Prostate gland (tissue), 2 donors: ENCODE measurements at regions of chr14 and their contacts with region 1.

Region 1: GRCh38 chr14:52824507-52824906 is 33.1 kb upstream of the GNPNAT1 start:
- DNase-seq: no peak
- H3K4me3 ChIP-seq: no peak overlapping the region
- H3K27ac ChIP-seq: no peak overlapping the region
- H3K4me1 ChIP-seq: no peaks in the 10 kb centered on the region
- H3K27me3 ChIP-seq: no peaks in the 10 kb centered on the region
- CTCF ChIP-seq: no peak
- POLR2A ChIP-seq: no peak

Region 2: GRCh38 chr14:52961060-52961639 is 136.6 kb after region 1 on chr14:
- intact Hi-C with region 1: loop called (anchors 2 kb)
- DNase-seq: peak; percentile 63
- H3K4me3 ChIP-seq: no peak overlapping the region
- H3K27ac ChIP-seq: peak overlapping the region; percentile 20 to 62
- H3K4me1 ChIP-seq: no peaks in the 10 kb centered on the region
- H3K27me3 ChIP-seq: no peaks in the 10 kb centered on the region
- CTCF ChIP-seq: peak in 3 of 4 experiments; percentile 66 to 78 (median 74)
- POLR2A ChIP-seq: no peak

Region 3: DNA sequence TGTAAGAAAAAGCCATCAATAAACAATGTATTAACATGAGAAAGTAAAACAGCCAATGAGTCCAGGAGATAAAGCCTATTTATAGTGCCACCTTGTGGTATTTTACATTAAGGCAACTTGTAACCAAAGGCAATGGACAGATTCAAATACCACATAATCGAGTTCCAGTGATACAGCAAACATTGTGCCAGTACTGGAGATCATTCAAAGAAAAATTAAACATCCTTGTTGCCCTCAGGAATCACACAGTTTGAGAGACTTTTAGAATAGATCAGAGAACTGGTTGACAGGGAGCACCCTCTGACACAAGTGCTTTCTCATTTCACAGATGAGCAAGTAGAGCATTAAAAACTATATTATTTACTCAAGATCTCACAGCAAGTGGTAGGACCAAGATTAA is 230.5 kb after region 1 on chr14:
- intact Hi-C with region 1: loop called (anchors 5 kb)
- DNase-seq: no peak
- H3K4me3 ChIP-seq: no peak overlapping the region
- H3K27ac ChIP-seq: no peak overlapping the region
- H3K4me1 ChIP-seq: no peaks in the 10 kb centered on the region
- H3K27me3 ChIP-seq: no peaks in the 10 kb centered on the region
- CTCF ChIP-seq: peak; percentile 27 to 70 (median 63)
- POLR2A ChIP-seq: no peak

Region 4: DNA sequence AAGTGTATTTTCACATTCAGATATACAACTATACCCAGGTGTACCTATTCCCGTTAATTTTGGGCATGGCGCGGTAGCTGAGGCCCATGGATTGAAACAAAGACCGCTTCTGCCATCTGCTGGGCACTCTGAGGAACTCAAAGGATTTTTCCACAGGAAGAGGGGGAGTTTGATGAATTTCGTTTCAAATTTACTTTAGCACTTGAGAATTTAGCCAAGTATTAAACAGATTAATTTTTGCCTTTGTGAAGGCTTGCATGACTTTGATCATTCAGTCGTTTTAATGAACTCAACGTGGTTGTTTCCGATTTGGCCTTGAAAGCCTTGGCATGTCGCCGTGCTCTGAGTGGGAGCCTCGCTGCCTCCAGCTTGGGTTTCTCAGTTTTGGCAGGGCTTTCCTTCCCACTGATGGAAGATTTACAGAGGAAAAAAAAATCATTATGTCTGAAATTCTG is 481.8 kb after region 1 on chr14:
- intact Hi-C with region 1: loop called (anchors 10 kb)
- DNase-seq: peak; percentile 19
- H3K4me3 ChIP-seq: peak overlapping the region; percentile 9 to 21
- H3K27ac ChIP-seq: peak overlapping the region in 1 of 2 donors; percentile 32
- H3K4me1 ChIP-seq: no peaks in the 10 kb centered on the region
- H3K27me3 ChIP-seq: no peaks in the 10 kb centered on the region
- CTCF ChIP-seq: peak; percentile 35 to 85 (median 69)
- POLR2A ChIP-seq: no peak